ENCODE measurements at regions of chr15 and their contacts with region 1.

Region 1: DNA sequence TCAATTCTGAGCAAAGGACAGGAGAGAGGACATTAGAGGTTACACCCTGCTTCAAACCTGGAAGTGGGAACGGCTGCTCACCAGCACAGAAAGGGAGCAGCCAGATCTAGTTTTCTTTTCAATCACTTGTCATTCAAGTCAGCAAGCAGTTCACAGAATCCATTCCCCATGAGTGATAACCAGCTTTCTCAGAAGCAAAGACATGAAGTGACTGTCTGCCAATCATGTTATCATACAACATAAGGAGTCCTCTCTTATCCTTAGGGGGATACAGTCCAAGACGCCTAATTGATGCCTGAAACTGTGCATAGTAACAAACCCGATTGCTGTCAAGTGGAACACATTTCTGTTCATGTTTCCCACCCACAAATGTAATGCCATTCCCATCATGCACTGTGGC is 54.7 kb downstream of the FAM98B start:
- DNase-seq: no peak
- ATAC-seq: no peak
- H3K4me3 ChIP-seq: no peak overlapping the region
- H3K4me3 Mint-ChIP-seq: no peak overlapping the region
- H3K27ac ChIP-seq: peak overlapping the region in 1 of 2 experiments; percentile 17
- H3K27ac Mint-ChIP-seq: peak overlapping the region; percentile 80
- H3K4me1 ChIP-seq: no peaks in the 10 kb centered on the region
- H3K4me1 Mint-ChIP-seq: peaks cover 10% of the 10 kb centered on the region
- H3K27me3 ChIP-seq: no peaks in the 10 kb centered on the region
- H3K27me3 Mint-ChIP-seq: no peaks in the 10 kb centered on the region
- CTCF ChIP-seq: no peak

Region 2: DNA sequence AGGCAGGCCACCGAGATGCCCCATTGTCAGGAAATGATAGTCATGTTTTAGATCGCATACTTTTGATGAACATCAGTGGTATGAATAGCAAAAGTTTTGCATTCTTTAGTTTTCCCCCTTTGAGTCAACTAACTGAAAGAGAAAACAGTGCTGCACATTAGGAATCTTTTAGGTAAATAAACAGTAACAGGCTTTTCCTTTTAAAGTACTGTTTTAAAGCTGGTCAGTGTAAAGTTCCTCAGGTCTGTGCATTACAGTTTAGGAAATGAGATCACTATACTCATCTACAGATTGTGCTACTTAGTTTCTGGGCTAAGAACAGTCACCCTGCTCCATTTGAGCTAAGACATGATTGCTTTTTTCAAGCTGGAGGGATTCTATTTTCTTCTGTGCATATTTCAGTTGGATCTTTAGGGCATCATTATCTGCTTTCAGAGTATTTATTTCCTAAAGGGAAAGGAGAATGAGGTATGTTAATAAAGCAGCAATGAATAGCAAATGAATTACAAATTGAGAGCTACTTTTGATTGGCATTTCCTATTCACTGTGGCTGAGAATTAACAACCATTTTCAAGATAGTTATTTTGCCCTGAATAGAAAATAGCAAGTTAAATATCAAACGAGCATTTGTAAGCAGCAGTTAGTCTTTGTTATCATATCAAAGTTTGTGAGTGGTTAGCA is 18.3 kb before region 1 on chr15:
- CTCF ChIA-PET with region 1: interaction called, 4 read pairs
- POLR2A ChIA-PET with region 1: interaction called, 4 read pairs
- intact Hi-C with region 1: loop called in 1 of 2 experiments (anchors 2 kb)
- DNase-seq: no peak
- ATAC-seq: no peak
- H3K4me3 ChIP-seq: no peak overlapping the region
- H3K4me3 Mint-ChIP-seq: no peak overlapping the region
- H3K27ac ChIP-seq: peak overlapping the region in 1 of 2 experiments; percentile 17
- H3K27ac Mint-ChIP-seq: peak overlapping the region; percentile 66
- H3K4me1 ChIP-seq: peaks cover 14% of the 10 kb centered on the region
- H3K4me1 Mint-ChIP-seq: peaks cover 36% of the 10 kb centered on the region
- H3K27me3 ChIP-seq: no peaks in the 10 kb centered on the region
- H3K27me3 Mint-ChIP-seq: no peaks in the 10 kb centered on the region
- CTCF ChIP-seq: no peak

Region 3: GRCh38 chr15:38521316-38521715 is 12.7 kb after region 1 on chr15:
- CTCF ChIA-PET with region 1: interaction called, 6 read pairs
- POLR2A ChIA-PET with region 1: interaction called, 5 read pairs
- intact Hi-C with region 1: loop called in 1 of 2 experiments (anchors 2 kb)
- DNase-seq: no peak
- ATAC-seq: no peak
- H3K4me3 ChIP-seq: no peak overlapping the region
- H3K4me3 Mint-ChIP-seq: no peak overlapping the region
- H3K27ac ChIP-seq: no peak overlapping the region
- H3K27ac Mint-ChIP-seq: peak overlapping the region; percentile 83
- H3K4me1 ChIP-seq: peaks cover 5% of the 10 kb centered on the region
- H3K4me1 Mint-ChIP-seq: peaks cover 56% of the 10 kb centered on the region
- H3K27me3 ChIP-seq: no peaks in the 10 kb centered on the region
- H3K27me3 Mint-ChIP-seq: no peaks in the 10 kb centered on the region
- CTCF ChIP-seq: no peak

Measured in CD8-positive, alpha-beta T cell (primary cell).